Naive thymus-derived CD4-positive, alpha-beta T cell (primary cell): ENCODE measurements at regions of chr1 and their contacts with region 1.

Region 1: DNA sequence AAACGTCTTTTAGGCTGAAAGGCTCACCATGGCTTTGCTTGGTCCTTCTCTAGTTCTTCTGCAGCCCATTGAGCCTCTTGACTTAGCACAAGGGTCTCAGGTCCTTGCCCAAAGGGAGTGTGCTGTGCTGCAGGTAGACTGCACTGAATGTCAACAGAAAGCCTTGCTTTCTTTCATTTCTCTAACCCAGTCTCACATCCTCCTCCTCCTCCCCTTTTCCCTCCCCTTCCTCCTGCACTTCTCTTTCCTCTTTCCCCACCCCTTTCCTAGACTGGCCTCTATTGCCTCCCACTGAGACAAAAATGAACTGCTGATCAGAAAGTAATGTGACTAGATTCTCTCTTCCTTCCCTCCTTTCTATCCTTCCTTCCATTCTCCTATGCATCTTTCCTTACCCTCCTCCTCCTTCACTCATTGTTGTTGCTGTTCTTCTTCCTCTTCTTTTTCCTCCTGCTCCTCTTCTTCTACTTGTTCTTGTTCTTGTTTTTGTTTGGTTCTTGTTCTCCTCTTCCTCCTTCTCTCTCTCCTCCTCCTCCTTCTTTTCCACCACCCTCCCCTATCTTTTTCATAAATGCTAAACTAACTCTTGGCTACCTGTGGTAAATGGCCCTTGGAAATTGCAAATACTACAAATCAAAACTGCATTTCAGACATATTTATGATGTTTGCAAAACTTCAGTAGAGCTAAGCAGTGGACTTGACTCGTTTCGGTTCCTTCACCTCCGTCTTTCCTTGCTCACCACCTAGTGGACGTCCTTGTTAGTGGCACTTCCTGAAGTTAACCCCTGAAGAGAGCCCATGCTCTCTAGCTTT is at the start of gene SELL:
- DNase-seq: peak; percentile 21 to 83 (median 76)
- ATAC-seq: peak; percentile 91
- H3K4me3 ChIP-seq: peak within 1 kb of the TSS; percentile 62
- H3K4me3 Mint-ChIP-seq: peak within 1 kb of the TSS in 9 of 10 donors; percentile 90 to 99 (median 97)
- H3K27ac ChIP-seq: peak within 1 kb of the TSS; percentile 70
- H3K27ac Mint-ChIP-seq: peak within 1 kb of the TSS in 8 of 9 donors; percentile 85 to 98 (median 94)
- H3K4me1 ChIP-seq: peaks cover 3 to 7% of the 10 kb centered on the region in 2 donors
- H3K4me1 Mint-ChIP-seq: peaks cover 6 to 32% (median 20%) of the 10 kb centered on the region in 7 donors
- H3K27me3 ChIP-seq: no peaks in the 10 kb centered on the region
- H3K27me3 Mint-ChIP-seq: peaks cover 0 to 30% (median 0%) of the 10 kb centered on the region in 5 donors
- total RNA-seq, gene SELL: 303 to 633 (median 519) TPM

Region 2: DNA sequence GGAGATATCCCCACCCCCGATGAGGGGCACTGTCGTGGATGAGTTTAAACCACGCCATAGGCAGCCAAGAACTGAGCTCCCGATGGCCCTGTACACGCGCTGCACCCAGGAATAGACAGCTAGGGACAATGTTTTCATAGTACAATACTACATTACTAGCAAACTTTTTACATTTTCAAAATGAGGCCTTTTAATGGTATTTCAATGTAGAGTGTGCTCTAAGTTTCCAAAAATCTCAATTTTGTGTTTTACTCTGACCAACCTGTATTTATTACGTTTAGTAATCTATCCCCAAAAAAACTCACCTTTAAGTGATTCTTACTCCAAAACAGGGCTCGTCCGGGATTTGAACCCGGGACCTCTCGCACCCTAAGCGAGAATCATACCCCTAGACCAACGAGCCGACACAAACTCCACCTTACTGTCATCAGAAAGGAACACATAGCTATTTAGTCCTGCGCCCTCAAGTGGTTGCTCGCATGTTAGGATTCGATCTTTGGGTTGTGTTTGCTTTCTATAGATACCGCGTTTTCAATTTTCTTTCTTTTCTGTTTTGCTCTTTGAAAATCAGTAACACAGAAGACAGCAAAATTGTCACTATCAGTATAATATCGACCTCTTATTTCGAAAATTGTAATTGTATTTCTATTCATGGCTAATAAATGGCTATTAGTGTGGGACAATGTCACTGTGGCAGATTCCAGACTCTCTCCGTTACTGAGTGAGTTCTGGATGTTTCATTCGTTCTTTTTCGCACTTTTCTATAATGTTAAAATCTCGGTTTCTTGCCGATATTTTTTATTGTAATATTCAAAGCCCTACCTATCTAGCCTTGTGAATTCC is 1996.3 kb before region 1 on chr1:
- CTCF ChIA-PET with region 1: no interaction called
- POLR2A ChIA-PET with region 1: no interaction called
- intact Hi-C with region 1: loop called in 1 of 2 experiments (anchors 10 kb)
- DNase-seq: peak; percentile 66 to 91 (median 89)
- ATAC-seq: peak; percentile 81
- H3K4me3 ChIP-seq: peak overlapping the region; percentile 88
- H3K4me3 Mint-ChIP-seq: peak overlapping the region; percentile 89 to 98 (median 93)
- H3K27ac ChIP-seq: peak overlapping the region; percentile 48
- H3K27ac Mint-ChIP-seq: peak overlapping the region; percentile 87 to 100 (median 98)
- H3K4me1 ChIP-seq: peaks cover 4 to 13% of the 10 kb centered on the region in 2 donors
- H3K4me1 Mint-ChIP-seq: peaks cover 26 to 53% (median 45%) of the 10 kb centered on the region in 7 donors
- H3K27me3 ChIP-seq: no peaks in the 10 kb centered on the region
- H3K27me3 Mint-ChIP-seq: peaks cover 0 to 16% (median 0%) of the 10 kb centered on the region in 5 donors

Region 3: DNA sequence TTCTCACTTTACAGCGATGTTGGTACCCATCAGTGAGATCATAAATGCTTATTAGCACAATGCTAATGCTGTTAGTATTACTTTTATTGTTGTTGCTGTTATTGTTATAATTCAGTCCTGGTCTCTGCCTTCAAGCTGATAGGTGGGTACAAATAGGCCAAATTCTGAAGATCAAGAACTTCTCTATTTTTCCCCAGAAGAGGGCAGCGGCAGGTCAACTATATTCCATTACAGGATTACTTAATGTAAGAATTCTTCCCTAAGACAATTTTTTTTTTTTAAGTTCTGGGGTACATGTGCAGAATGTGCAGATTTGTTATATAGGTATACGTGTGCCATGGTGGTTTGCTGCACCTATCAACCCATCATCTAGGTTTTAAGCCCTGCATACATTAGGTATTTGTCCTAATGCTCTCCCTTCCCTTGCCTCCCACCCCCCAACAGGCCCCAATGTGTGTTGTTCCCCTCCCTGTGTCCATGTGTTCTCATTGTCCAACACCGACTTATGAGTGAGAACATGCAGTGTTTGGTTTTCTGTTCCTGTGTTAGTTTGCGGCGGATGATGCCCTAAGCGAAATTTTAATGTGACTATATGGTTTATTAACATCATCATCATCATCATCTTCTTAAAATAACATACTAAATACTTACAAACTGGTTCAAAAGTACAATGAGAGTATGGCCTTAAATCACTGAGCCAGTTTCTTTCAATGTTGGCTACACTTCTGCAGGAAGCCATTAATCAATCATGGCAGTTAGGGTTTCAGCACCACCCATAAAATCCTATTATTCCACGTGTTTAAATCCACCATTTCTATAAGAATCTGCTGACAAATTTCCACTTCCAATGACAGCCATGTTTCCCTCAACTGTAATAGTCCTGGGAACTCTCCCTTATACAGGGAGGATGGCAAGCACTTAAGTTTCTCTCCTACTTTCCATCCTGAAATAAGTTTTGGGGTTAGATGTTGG is 245.1 kb before region 1 on chr1:
- CTCF ChIA-PET with region 1: interaction called, 3 read pairs
- POLR2A ChIA-PET with region 1: no interaction called
- intact Hi-C with region 1: loop called in 1 of 2 experiments (anchors 1 kb)
- DNase-seq: peak in 3 of 9 donors; percentile 10 to 18 (median 18)
- ATAC-seq: no peak
- H3K4me3 ChIP-seq: no peak overlapping the region
- H3K4me3 Mint-ChIP-seq: no peak overlapping the region
- H3K27ac ChIP-seq: no peak overlapping the region
- H3K27ac Mint-ChIP-seq: peak overlapping the region in 1 of 9 donors; percentile 27
- H3K4me1 ChIP-seq: no peaks in the 10 kb centered on the region
- H3K4me1 Mint-ChIP-seq: peaks cover 0 to 6% (median 5%) of the 10 kb centered on the region in 7 donors
- H3K27me3 ChIP-seq: no peaks in the 10 kb centered on the region
- H3K27me3 Mint-ChIP-seq: peaks cover 0 to under 1% (median 0%) of the 10 kb centered on the region in 5 donors

Region 4: GRCh38 chr1:169586395-169587255 is 125.0 kb before region 1 on chr1 and contains the start of gene F5:
- CTCF ChIA-PET with region 1: interaction called, 50 read pairs
- POLR2A ChIA-PET with region 1: interaction called, 11 read pairs
- intact Hi-C with region 1: loop called (anchors 1 kb)
- DNase-seq: peak; percentile 53 to 78 (median 74)
- ATAC-seq: peak; percentile 98
- H3K4me3 ChIP-seq: peak within 1 kb of the TSS; percentile 47
- H3K4me3 Mint-ChIP-seq: peak within 1 kb of the TSS; percentile 81 to 93 (median 90)
- H3K27ac ChIP-seq: peak within 1 kb of the TSS; percentile 66
- H3K27ac Mint-ChIP-seq: peak within 1 kb of the TSS; percentile 50 to 94 (median 86)
- H3K4me1 ChIP-seq: peaks cover 10 to 14% of the 10 kb centered on the region in 2 donors
- H3K4me1 Mint-ChIP-seq: peaks cover 18 to 71% (median 53%) of the 10 kb centered on the region in 7 donors
- H3K27me3 ChIP-seq: no peaks in the 10 kb centered on the region
- H3K27me3 Mint-ChIP-seq: peaks cover 0 to 4% (median 0%) of the 10 kb centered on the region in 5 donors
- total RNA-seq, gene F5: 3.7 to 14.6 (median 5.7) TPM

Region 5: DNA sequence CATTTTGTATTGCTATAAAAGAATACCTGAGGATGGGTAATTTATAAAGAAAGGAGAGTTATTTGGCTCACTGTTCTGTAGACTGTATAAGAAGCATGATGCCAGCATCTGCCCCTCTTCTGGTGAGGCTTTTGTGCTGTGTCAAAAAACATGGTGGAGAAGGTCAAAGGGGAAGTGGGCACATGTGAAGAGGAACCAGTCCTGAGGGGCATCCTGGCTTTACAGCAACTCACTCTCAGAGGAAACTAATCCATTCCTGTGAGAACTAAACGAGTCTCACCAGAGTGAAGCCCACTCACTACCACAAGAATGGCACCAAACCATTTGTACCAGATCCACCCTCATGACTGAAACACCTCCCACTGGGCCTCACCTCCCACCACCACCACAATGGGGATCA is 63.0 kb before region 1 on chr1:
- CTCF ChIA-PET with region 1: interaction called, 3 read pairs
- POLR2A ChIA-PET with region 1: interaction called, 5 read pairs
- intact Hi-C with region 1: loop called in 1 of 2 experiments (anchors 2 kb)
- DNase-seq: no peak
- ATAC-seq: no peak
- H3K4me3 ChIP-seq: no peak overlapping the region
- H3K4me3 Mint-ChIP-seq: peak overlapping the region in 8 of 10 donors; percentile 10 to 74 (median 62)
- H3K27ac ChIP-seq: peak overlapping the region; percentile 17
- H3K27ac Mint-ChIP-seq: peak overlapping the region in 8 of 9 donors; percentile 65 to 94 (median 88)
- H3K4me1 ChIP-seq: peaks cover 14 to 28% of the 10 kb centered on the region in 2 donors
- H3K4me1 Mint-ChIP-seq: peaks cover 18 to 55% (median 46%) of the 10 kb centered on the region in 7 donors
- H3K27me3 ChIP-seq: no peaks in the 10 kb centered on the region
- H3K27me3 Mint-ChIP-seq: no peaks in the 10 kb centered on the region

Region 6: DNA sequence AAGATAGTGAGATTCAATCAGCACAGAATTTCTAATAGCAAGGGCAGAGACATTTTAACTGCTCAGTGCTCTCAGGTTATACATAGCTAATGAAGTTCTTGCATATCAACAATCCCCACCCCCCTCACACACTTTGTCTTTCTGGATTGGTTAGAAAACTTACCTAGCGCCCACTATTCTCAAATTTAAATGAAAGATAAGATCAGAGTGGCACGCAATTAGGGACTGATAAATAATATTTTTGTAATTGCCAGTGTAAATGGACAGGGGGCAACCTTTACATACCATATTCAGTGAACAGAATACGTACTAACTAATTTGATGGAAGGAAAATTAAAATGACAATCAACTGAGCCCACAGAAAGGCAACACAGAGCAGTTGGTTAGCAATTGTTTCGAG is 12.0 kb before region 1 on chr1:
- CTCF ChIA-PET with region 1: interaction called, 121 read pairs
- POLR2A ChIA-PET with region 1: interaction called, 216 read pairs
- intact Hi-C with region 1: loop called (anchors 1 kb)
- DNase-seq: no peak
- ATAC-seq: no peak
- H3K4me3 ChIP-seq: no peak overlapping the region
- H3K4me3 Mint-ChIP-seq: peak overlapping the region in 9 of 10 donors; percentile 51 to 99 (median 54)
- H3K27ac ChIP-seq: peak overlapping the region; percentile 70
- H3K27ac Mint-ChIP-seq: peak overlapping the region in 6 of 9 donors; percentile 52 to 97 (median 88)
- H3K4me1 ChIP-seq: peaks cover 94 to 99% of the 10 kb centered on the region in 2 donors
- H3K4me1 Mint-ChIP-seq: peaks cover 46 to 98% (median 90%) of the 10 kb centered on the region in 7 donors
- H3K27me3 ChIP-seq: no peaks in the 10 kb centered on the region
- H3K27me3 Mint-ChIP-seq: no peaks in the 10 kb centered on the region

Region 7: DNA sequence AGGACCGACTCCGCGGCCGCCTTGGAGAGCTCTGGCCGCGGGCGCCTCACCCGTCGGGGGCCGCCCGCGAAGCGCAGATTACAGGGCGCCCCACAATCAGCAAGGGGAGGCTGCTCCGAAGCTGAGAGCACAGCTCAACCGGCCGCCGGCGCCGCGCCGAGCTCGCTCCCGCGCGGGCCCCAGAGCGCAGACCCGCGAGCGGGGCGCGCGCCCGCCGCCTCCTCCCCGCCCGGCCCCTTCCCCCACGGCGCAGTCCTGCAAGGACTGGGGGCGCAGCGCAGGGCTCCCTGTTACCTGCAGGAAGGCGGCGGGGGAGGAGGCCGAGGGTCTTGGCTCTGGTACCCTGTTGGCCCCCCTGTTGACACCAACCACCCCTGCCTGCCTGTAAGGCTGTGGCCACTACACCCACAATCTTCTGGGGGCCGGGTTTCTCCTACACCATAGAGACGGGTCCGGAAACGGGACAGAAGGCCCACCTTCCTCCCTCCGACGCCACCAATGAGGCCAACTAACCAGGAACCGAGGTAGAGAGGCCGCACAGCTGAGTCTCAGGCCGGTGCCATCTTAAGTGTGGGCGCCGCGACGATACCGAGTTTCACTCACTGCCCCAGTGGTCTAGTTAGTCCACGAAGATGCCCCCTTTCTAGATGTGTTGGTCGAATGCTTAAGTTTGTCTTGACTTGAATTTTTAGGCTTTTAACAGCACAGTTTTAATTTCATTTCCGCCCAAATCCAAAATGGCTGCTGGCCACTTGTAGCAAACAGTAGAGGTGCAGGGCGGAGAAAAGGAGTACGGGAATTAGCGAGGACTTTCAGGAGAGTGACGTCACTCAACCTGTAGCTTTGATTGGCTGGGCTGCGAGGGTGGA is 182.1 kb after region 1 on chr1 and contains the start of gene SCYL3:
- CTCF ChIA-PET with region 1: no interaction called
- POLR2A ChIA-PET with region 1: no interaction called
- intact Hi-C with region 1: loop called (anchors 2 to 5 kb)
- DNase-seq: peak; percentile 85 to 97 (median 95)
- ATAC-seq: peak; percentile 92
- H3K4me3 ChIP-seq: peak within 1 kb of the TSS; percentile 77
- H3K4me3 Mint-ChIP-seq: peak within 1 kb of the TSS; percentile 85 to 97 (median 94)
- H3K27ac ChIP-seq: peak within 1 kb of the TSS; percentile 95
- H3K27ac Mint-ChIP-seq: peak within 1 kb of the TSS; percentile 98 to 100 (median 100)
- H3K4me1 ChIP-seq: peaks cover 25 to 28% of the 10 kb centered on the region in 2 donors
- H3K4me1 Mint-ChIP-seq: peaks cover 26 to 51% (median 46%) of the 10 kb centered on the region in 7 donors
- H3K27me3 ChIP-seq: no peaks in the 10 kb centered on the region
- H3K27me3 Mint-ChIP-seq: peaks cover 0 to 18% (median 4%) of the 10 kb centered on the region in 5 donors
- total RNA-seq, gene SCYL3: 9.5 to 22.7 (median 17.3) TPM